Activated T-helper 2 cell treated with anti-CD3 and anti-CD28 coated beads, Interferon-gamma antibody, Interleukin-2, Interleukin-4, amounts not matched to agents 10 μg/mL and 5 μg/mL and 100 μg/mL, durations not matched to agents 14 hours and 24 hours and 36 hours (primary cell): ENCODE measurements at regions of chr16 and their contacts with region 1.

Region 1: DNA sequence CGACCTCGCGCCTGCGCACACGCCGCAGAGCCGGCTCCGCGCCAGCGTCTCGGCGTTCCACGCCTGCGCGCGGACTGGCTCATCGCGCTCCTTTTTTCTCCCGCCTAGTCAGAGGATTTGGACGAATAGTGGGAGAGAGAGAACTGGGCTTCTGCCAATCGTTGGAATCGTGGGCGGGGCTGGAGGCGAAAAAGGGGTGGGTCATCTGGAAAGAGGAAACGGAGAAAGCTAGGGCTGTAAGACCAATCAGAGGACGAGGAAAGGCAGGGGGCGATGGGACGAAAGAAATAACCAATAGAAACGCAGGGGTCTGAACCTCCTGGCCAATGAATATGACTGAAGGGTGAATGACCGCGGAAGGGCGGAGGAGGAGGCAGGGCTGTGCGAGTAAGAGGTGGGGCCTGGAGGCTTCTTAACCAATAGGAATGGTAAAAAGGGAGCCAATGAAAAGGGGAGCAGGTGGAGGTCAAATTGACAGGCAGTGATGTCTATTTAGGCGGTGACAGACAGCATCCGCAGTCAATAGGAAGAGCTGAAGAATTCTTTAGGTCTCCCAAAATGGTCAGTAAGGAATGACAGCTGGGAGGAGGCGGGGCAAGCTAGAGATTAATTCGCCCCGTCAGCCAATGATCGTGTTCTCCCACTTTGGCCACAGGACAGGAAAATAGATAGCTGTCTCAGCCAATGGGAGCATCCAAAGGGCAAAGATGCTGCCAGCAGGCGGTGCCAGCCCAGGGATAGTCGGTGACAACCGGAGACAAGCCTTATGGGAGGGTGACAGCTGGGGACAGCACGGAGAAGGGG is at the start of gene TBC1D10B:
- DNase-seq: peak; percentile 100
- H3K4me3 Mint-ChIP-seq: peak within 1 kb of the TSS; percentile 87
- H3K27ac Mint-ChIP-seq: peak within 1 kb of the TSS; percentile 91
- H3K4me1 Mint-ChIP-seq: peaks cover 40% of the 10 kb centered on the region
- H3K27me3 Mint-ChIP-seq: no peaks in the 10 kb centered on the region
- total RNA-seq, gene TBC1D10B: 63.4 and 64.4 TPM in 2 replicates

Region 2: GRCh38 chr16:30335598-30336474 is 34.8 kb before region 1 on chr16:
- intact Hi-C with region 1: loop called (anchors 2 kb)
- DNase-seq: no peak
- H3K4me3 Mint-ChIP-seq: peak overlapping the region; percentile 83
- H3K27ac Mint-ChIP-seq: peak overlapping the region; percentile 73
- H3K4me1 Mint-ChIP-seq: peaks cover 15% of the 10 kb centered on the region
- H3K27me3 Mint-ChIP-seq: no peaks in the 10 kb centered on the region

Region 3: DNA sequence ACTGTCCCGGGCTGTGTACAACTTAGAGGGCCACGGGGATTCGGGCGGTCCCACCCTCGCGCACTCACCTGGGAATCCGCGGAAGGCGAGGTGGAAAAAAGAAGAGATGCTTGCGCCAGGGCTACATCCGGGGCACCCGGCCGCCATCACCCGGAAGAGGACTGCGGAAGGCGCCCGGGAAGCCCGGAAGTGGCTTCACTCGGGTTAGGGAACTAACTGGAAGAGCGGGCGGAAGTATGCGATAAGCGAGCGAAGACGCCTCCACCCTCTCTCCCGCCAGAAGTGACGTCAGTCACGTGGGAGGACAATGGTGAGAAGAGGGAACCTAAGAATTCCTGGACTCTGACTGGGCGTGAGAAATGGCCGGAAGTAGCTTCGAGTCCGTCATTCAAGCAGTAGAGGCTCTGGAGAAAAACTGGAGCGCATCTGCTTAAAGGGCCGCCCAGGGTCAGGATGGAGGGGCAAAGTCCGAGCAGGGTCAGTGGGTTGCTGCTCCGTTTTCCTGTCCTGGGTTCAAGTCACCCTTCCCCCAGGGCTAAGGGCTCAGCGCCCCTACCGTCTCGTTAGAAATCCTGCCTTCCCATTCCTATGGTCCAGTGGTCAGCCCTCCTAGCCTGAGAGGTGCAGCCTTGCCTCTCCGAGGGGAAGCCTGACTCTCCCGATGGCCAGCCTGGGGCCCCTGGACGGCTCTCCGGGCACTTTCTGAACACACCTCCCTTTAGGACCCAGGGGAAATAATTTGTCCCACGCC is 15.3 kb before region 1 on chr16 and contains the start of gene CD2BP2:
- intact Hi-C with region 1: loop called (anchors 1 kb)
- DNase-seq: peak; percentile 84
- H3K4me3 Mint-ChIP-seq: peak within 1 kb of the TSS; percentile 93
- H3K27ac Mint-ChIP-seq: peak within 1 kb of the TSS; percentile 89
- H3K4me1 Mint-ChIP-seq: peaks cover 37% of the 10 kb centered on the region
- H3K27me3 Mint-ChIP-seq: no peaks in the 10 kb centered on the region
- total RNA-seq, gene CD2BP2: 80.1 and 84.5 TPM in 2 replicates

Region 4: GRCh38 chr16:30526823-30527635 is 156.4 kb after region 1 on chr16:
- intact Hi-C with region 1: loop called (anchors 5 kb)
- DNase-seq: peak; percentile 94
- H3K4me3 Mint-ChIP-seq: peak overlapping the region; percentile 84
- H3K27ac Mint-ChIP-seq: peak overlapping the region; percentile 67
- H3K4me1 Mint-ChIP-seq: peaks cover 23% of the 10 kb centered on the region
- H3K27me3 Mint-ChIP-seq: no peaks in the 10 kb centered on the region

Region 5: DNA sequence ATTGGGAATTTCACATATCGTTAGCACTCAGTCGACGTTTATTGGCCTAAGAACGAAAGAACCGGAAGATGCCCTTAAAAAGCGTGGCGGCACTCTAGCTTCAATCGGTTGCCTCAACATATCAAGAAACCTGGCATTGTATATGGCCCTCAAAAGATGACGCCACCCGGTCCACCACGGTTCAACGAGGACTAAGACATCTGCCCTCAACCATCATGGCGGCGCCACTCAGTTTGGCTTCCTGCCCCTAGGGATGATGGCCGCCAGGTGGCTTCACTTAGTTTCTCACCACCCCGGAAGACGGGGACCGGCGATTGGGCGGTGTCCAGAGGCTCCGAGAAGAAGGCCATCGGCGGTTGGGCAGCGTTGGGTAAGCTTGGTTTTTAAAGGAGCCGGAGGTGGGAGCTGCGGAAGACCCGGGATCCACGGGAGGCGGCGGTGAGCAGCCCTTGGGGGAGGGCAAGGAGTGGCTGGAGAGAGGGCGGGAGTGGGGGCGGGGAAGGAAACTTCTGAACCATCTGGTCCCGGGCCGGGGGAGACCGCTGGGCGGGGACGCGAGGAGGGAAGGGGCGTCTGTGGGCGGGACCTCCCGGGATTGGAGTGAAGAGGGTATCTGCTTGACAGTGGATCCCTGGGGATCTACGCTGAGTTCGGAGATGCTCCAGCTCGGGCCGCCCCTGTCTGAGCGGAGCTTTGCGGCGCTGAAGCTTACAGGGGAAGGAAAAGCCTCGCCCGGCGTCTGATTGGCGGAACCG is 279.9 kb after region 1 on chr16 and contains the start of gene PRR14:
- intact Hi-C with region 1: loop called (anchors 1 kb)
- DNase-seq: peak; percentile 99
- H3K4me3 Mint-ChIP-seq: peak within 1 kb of the TSS; percentile 98
- H3K27ac Mint-ChIP-seq: peak within 1 kb of the TSS; percentile 97
- H3K4me1 Mint-ChIP-seq: peaks cover 13% of the 10 kb centered on the region
- H3K27me3 Mint-ChIP-seq: no peaks in the 10 kb centered on the region
- total RNA-seq, gene PRR14: 84.0 and 90.5 TPM in 2 replicates